BJ (cell line): ENCODE measurements at regions of chr17 and their contacts with region 1.

Region 1: GRCh38 chr17:73371285-73371684 is 59.5 kb upstream of the CDC42EP4 start:
- DNase-seq: peak; percentile 42
- H3K4me3 ChIP-seq: no peak overlapping the region
- H3K27me3 ChIP-seq: peaks cover 9% of the 10 kb centered on the region
- CTCF ChIP-seq: no peak

Region 2: GRCh38 chr17:73255671-73256181 is 115.6 kb before region 1 on chr17:
- CTCF ChIA-PET with region 1: interaction called, 427 read pairs
- POLR2A ChIA-PET with region 1: no interaction called
- DNase-seq: no peak
- H3K4me3 ChIP-seq: no peak overlapping the region
- H3K27me3 ChIP-seq: no peaks in the 10 kb centered on the region; the same call in 1 of the 2 replicates
- CTCF ChIP-seq: peak; percentile 98

Region 3: GRCh38 chr17:73262676-73263642 is 108.3 kb before region 1 on chr17:
- CTCF ChIA-PET with region 1: interaction called, 427 read pairs
- POLR2A ChIA-PET with region 1: no interaction called
- DNase-seq: no peak
- H3K4me3 ChIP-seq: no peak overlapping the region
- H3K27me3 ChIP-seq: no peaks in the 10 kb centered on the region
- CTCF ChIP-seq: no peak

Region 4: GRCh38 chr17:73281928-73282327 is 89.4 kb before region 1 on chr17:
- CTCF ChIA-PET with region 1: interaction called, 12 read pairs
- POLR2A ChIA-PET with region 1: no interaction called
- DNase-seq: no peak
- H3K4me3 ChIP-seq: no peak overlapping the region
- H3K27me3 ChIP-seq: no peaks in the 10 kb centered on the region
- CTCF ChIP-seq: no peak

Region 5: DNA sequence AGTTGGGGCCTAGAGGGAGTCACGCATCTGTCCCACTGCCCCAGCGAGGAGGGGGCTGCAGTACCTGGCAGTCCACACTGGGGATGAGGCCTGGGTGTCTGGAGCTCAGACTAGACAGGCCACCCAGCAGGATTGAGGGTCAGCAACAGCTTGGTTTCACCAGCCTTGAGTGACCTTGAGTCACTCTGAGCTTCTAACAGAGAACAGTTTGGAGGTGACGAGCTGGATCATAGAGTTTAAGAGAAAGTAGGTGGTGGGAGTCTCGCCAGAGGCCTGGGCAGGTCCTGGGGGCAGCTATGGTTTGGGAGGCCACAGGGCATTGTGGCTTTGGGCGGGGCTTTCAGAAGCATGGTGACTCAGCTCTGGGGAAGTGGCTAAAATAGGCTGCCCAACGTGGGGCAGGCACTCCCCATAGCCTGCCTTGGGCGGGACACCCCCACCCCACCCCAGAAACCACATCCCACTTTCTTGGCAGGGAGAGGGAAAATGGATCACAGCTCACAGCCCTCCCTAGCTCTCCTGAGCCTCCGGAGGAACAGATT is 80.0 kb before region 1 on chr17:
- CTCF ChIA-PET with region 1: interaction called, 15 read pairs
- POLR2A ChIA-PET with region 1: interaction called, 13 read pairs
- DNase-seq: peak; percentile 83
- H3K4me3 ChIP-seq: no peak overlapping the region
- H3K27me3 ChIP-seq: no peaks in the 10 kb centered on the region
- CTCF ChIP-seq: no peak

Region 6: GRCh38 chr17:73311781-73312641 is 59.3 kb before region 1 on chr17 and contains the start of gene CDC42EP4:
- CTCF ChIA-PET with region 1: interaction called, 114 read pairs
- POLR2A ChIA-PET with region 1: interaction called, 4 read pairs
- DNase-seq: peak; percentile 68
- H3K4me3 ChIP-seq: peak within 1 kb of the TSS; percentile 99
- H3K27me3 ChIP-seq: no peaks in the 10 kb centered on the region
- CTCF ChIP-seq: no peak
- polyA plus RNA-seq, gene CDC42EP4: 19.6 and 28.0 TPM in 2 replicates

Region 7: GRCh38 chr17:73342050-73342522 is 29.2 kb before region 1 on chr17:
- CTCF ChIA-PET with region 1: interaction called, 13 read pairs
- POLR2A ChIA-PET with region 1: no interaction called
- DNase-seq: no peak
- H3K4me3 ChIP-seq: no peak overlapping the region
- H3K27me3 ChIP-seq: no peaks in the 10 kb centered on the region
- CTCF ChIP-seq: no peak